Activated T-helper 1 cell treated with anti-CD3 and anti-CD28 coated beads, Interleukin-12 subunit alpha, Interleukin-12 subunit beta, Interleukin-2, Interleukin-4 antibody, amounts not matched to agents 30 ng/mL and 10 ng/mL and 1 ng/mL, durations not matched to agents 14 hours and 24 hours and 36 hours (primary cell): ENCODE measurements at regions of chr6 and their contacts with region 1.

Region 1: GRCh38 chr6:45377554-45378333 is at the start of gene SUPT3H:
- DNase-seq: peak; percentile 88
- H3K4me3 Mint-ChIP-seq: peak within 1 kb of the TSS; percentile 96
- H3K27ac Mint-ChIP-seq: peak within 1 kb of the TSS; percentile 100
- H3K4me1 Mint-ChIP-seq: peaks cover 27% of the 10 kb centered on the region
- H3K27me3 Mint-ChIP-seq: no peaks in the 10 kb centered on the region
- total RNA-seq, gene SUPT3H: 11.0 and 11.7 TPM in 2 replicates

Region 2: GRCh38 chr6:44932651-44933091 is 445.1 kb before region 1 on chr6:
- intact Hi-C with region 1: loop called (anchors 1 kb)
- DNase-seq: no peak
- H3K4me3 Mint-ChIP-seq: peak overlapping the region; percentile 79
- H3K27ac Mint-ChIP-seq: peak overlapping the region; percentile 94
- H3K4me1 Mint-ChIP-seq: peaks cover 56% of the 10 kb centered on the region
- H3K27me3 Mint-ChIP-seq: no peaks in the 10 kb centered on the region

Region 3: DNA sequence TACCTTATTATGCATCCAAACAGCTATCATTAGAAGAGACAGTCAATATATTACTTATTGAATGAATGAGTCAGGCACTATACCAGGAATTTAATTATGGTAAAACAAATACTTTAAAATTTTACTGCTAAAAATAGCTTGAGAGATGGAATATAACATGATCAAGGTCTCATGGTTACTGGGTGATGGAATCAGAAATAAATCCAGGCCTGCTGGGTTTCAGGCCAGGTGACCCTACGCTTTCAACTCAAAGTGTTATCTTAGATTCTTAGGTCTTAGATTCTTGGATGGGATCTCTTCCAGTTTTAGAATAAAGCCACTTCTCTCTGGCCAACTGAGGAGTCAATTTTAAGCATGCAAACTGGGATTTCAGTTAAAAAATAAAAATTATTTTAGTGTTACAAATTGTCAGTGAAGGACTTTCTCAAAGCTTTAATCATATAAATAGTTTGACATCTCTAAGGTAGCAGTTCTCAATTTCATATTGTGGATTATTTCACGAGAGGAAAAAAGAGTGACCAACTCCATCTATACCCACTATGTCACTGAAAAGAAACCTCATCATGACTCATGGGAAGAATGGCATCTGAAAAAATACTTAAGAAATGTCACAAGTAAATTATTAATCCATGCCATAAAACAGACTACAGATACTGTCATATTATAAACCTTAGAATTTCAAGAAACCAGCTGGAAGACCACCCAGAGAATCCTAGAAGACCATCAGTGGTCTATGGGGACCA is 333.1 kb before region 1 on chr6:
- intact Hi-C with region 1: no loop called
- DNase-seq: no peak
- H3K4me3 Mint-ChIP-seq: no peak overlapping the region
- H3K27ac Mint-ChIP-seq: no peak overlapping the region
- H3K4me1 Mint-ChIP-seq: peaks cover 27% of the 10 kb centered on the region
- H3K27me3 Mint-ChIP-seq: no peaks in the 10 kb centered on the region

Region 4: GRCh38 chr6:45116714-45117410 is 260.9 kb before region 1 on chr6:
- intact Hi-C with region 1: loop called (anchors 1 kb)
- DNase-seq: no peak
- H3K4me3 Mint-ChIP-seq: no peak overlapping the region
- H3K27ac Mint-ChIP-seq: peak overlapping the region; percentile 47
- H3K4me1 Mint-ChIP-seq: peaks cover 24% of the 10 kb centered on the region
- H3K27me3 Mint-ChIP-seq: no peaks in the 10 kb centered on the region

Region 5: GRCh38 chr6:45209762-45210161 is 168.0 kb before region 1 on chr6:
- intact Hi-C with region 1: loop called (anchors 5 kb)
- DNase-seq: no peak
- H3K4me3 Mint-ChIP-seq: no peak overlapping the region
- H3K27ac Mint-ChIP-seq: no peak overlapping the region
- H3K4me1 Mint-ChIP-seq: peaks cover 35% of the 10 kb centered on the region
- H3K27me3 Mint-ChIP-seq: no peaks in the 10 kb centered on the region

Region 6: GRCh38 chr6:45323656-45324224 is 54.0 kb before region 1 on chr6:
- intact Hi-C with region 1: no loop called
- DNase-seq: no peak
- H3K4me3 Mint-ChIP-seq: no peak overlapping the region
- H3K27ac Mint-ChIP-seq: no peak overlapping the region
- H3K4me1 Mint-ChIP-seq: peaks cover 42% of the 10 kb centered on the region
- H3K27me3 Mint-ChIP-seq: no peaks in the 10 kb centered on the region

Region 7: DNA sequence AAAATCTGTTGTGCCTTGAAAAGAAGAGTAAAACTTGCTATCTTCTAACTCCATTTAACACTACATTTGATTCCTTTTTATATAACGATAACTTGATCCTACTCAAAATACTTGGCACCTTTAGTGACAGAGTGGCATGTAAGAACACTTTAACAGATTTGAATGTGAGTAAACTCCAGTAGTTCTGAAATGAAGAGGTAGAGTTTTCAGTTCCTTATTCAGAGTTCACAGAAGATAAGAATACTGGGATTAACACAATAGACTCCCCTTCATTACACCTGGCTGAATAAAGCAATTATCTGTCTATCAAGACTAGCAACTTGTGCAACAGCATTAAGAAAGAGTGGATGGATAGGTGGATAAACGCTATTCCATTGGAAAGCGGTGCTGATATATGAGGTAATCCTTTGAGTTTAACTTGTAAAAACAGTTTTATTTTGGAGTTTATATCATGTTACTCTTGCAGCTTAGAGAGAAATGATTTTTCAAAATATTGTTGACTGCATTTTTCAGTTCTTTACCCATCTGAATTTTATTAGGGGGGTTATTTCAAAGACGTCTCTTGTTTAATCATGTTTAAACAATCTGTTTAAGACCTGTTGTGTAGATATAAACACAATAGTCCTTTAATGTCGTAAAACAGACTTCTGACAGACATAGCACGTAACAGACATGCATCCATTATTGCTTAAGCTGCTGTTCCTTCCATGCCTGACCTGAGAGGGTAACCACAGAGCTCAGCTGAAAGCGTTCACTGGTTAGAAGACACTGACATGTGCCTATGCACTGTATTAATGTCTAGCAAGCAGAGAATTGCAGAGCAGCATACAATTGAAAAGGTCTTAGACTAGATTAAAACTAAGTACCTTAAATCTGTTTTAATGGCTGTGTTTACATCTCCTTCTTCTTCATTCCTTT is 102.3 kb after region 1 on chr6:
- intact Hi-C with region 1: loop called (anchors 2 kb)
- DNase-seq: no peak
- H3K4me3 Mint-ChIP-seq: no peak overlapping the region
- H3K27ac Mint-ChIP-seq: no peak overlapping the region
- H3K4me1 Mint-ChIP-seq: peaks cover 16% of the 10 kb centered on the region
- H3K27me3 Mint-ChIP-seq: peaks cover 3% of the 10 kb centered on the region

Region 8: DNA sequence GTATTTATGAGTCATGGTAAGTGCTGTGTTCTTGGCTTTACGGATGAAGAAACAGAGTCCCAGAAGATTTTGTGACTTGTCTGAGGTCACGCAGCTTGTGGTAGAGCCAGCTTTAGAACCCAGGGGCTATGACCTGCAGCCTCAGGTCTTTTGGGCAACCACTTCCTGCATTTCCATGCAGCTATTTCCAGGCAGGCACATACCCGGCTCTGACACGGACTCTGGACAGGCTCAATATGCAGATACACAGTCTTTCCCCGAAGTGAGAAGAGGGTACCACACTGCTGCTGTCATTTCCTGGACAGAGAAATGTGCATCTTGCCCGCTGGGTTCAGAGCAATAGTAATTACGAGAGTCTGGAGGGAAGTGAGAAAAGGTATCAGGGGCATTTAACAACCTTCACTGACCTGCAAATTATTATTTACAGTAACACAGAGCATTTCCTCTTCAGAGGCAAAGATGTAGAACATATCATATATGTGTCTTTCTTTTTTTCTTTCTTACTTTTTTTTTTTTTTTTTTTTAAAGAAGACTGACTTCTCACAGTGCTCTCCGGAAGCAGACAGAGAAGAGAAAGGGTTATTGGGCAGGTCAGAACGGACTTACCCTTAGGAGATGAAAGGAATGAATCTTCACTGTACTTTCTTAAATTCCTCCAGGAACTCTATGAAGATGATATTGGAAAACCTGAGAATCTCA is 452.8 kb after region 1 on chr6:
- intact Hi-C with region 1: loop called (anchors 5 kb)
- DNase-seq: peak; percentile 44
- H3K4me3 Mint-ChIP-seq: peak overlapping the region; percentile 70
- H3K27ac Mint-ChIP-seq: peak overlapping the region; percentile 85
- H3K4me1 Mint-ChIP-seq: peaks cover 47% of the 10 kb centered on the region
- H3K27me3 Mint-ChIP-seq: no peaks in the 10 kb centered on the region